Naive thymus-derived CD4-positive, alpha-beta T cell (primary cell): ENCODE measurements at regions of chr11 and their contacts with region 1.

Region 1: DNA sequence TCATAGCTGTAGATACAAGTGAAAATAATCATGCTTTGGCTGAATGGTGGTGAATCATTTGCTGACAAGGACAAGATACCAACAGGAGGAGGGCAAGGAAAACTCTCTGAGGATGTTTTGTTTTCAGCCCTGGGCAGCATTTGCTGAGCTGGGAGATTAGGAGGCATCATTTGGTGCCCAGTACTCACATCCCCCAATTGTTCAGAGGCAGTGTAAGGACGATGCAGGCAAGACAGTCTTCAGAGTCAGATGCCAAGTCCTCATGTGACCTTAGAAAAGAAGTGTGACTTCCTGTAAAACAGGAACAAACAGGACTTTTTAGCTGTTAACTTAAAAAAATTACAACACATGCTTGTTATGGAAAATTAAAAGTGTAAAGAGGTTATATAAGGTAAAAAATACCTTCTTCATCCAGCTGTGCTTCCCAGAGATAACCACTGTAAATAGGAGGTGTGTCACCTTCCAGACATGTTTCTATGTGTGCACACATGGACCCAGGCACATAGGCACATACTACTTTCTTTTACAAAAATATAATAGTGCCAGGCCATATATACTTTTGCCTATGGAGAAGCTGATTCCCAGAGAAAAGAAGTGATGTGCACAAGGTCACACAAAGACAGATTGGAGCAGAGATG is 18.0 kb downstream of the CNTF start:
- DNase-seq: peak in 7 of 9 donors; percentile 10 to 55 (median 39)
- ATAC-seq: peak; percentile 76
- H3K4me3 ChIP-seq: no peak overlapping the region
- H3K4me3 Mint-ChIP-seq: peak overlapping the region in 9 of 10 donors; percentile 25 to 76 (median 66)
- H3K27ac ChIP-seq: peak overlapping the region; percentile 30
- H3K27ac Mint-ChIP-seq: peak overlapping the region in 8 of 9 donors; percentile 81 to 95 (median 89)
- H3K4me1 ChIP-seq: peaks cover 14 to 24% of the 10 kb centered on the region in 2 donors
- H3K4me1 Mint-ChIP-seq: peaks cover 13 to 31% (median 26%) of the 10 kb centered on the region in 7 donors
- H3K27me3 ChIP-seq: no peaks in the 10 kb centered on the region
- H3K27me3 Mint-ChIP-seq: peaks cover 0 to 9% (median 0%) of the 10 kb centered on the region in 5 donors

Region 2: GRCh38 chr11:58573451-58574104 is 66.9 kb before region 1 on chr11:
- CTCF ChIA-PET with region 1: interaction called, 4 read pairs
- POLR2A ChIA-PET with region 1: interaction called, 22 read pairs
- intact Hi-C with region 1: no loop called
- DNase-seq: peak in 8 of 9 donors; percentile 41 to 66 (median 58)
- ATAC-seq: peak; percentile 29
- H3K4me3 ChIP-seq: peak overlapping the region; percentile 99
- H3K4me3 Mint-ChIP-seq: peak overlapping the region; percentile 87 to 99 (median 96)
- H3K27ac ChIP-seq: peak overlapping the region; percentile 98
- H3K27ac Mint-ChIP-seq: peak overlapping the region; percentile 90 to 100 (median 98)
- H3K4me1 ChIP-seq: peaks cover 29 to 44% of the 10 kb centered on the region in 2 donors
- H3K4me1 Mint-ChIP-seq: peaks cover 27 to 84% (median 70%) of the 10 kb centered on the region in 7 donors
- H3K27me3 ChIP-seq: no peaks in the 10 kb centered on the region
- H3K27me3 Mint-ChIP-seq: peaks cover 0 to 5% (median 0%) of the 10 kb centered on the region in 5 donors

Region 3: DNA sequence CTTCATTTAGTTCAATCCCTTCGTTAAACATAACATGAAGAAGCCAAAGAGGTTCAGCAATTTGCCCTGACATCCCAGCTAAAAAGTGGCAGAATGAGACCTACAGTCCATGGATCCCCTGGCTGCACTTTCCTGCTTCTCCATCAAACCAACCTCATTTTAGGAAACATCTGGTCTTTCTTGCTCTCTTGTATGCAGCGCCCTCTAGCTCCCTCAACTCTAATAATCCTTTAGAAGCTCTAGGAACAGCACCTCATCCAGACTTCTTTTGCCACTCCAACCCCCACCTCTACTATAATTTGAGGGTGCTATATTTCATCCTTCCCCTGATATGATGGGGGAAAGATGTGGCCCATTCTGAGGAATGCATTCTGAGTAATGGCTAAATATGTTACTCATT is 10.6 kb before region 1 on chr11:
- CTCF ChIA-PET with region 1: interaction called, 40 read pairs
- POLR2A ChIA-PET with region 1: interaction called, 6 read pairs
- intact Hi-C with region 1: loop called in 1 of 2 experiments (anchors 1 kb)
- DNase-seq: peak in 4 of 9 donors; percentile 20 to 34 (median 29)
- ATAC-seq: peak; percentile 74
- H3K4me3 ChIP-seq: no peak overlapping the region
- H3K4me3 Mint-ChIP-seq: no peak overlapping the region
- H3K27ac ChIP-seq: no peak overlapping the region
- H3K27ac Mint-ChIP-seq: peak overlapping the region in 5 of 9 donors; percentile 33 to 75 (median 64)
- H3K4me1 ChIP-seq: no peaks in the 10 kb centered on the region
- H3K4me1 Mint-ChIP-seq: peaks cover 0 to 7% (median 5%) of the 10 kb centered on the region in 7 donors
- H3K27me3 ChIP-seq: no peaks in the 10 kb centered on the region
- H3K27me3 Mint-ChIP-seq: no peaks in the 10 kb centered on the region